ENCODE measurements at regions of chr14 and their contacts with region 1.

Region 1: DNA sequence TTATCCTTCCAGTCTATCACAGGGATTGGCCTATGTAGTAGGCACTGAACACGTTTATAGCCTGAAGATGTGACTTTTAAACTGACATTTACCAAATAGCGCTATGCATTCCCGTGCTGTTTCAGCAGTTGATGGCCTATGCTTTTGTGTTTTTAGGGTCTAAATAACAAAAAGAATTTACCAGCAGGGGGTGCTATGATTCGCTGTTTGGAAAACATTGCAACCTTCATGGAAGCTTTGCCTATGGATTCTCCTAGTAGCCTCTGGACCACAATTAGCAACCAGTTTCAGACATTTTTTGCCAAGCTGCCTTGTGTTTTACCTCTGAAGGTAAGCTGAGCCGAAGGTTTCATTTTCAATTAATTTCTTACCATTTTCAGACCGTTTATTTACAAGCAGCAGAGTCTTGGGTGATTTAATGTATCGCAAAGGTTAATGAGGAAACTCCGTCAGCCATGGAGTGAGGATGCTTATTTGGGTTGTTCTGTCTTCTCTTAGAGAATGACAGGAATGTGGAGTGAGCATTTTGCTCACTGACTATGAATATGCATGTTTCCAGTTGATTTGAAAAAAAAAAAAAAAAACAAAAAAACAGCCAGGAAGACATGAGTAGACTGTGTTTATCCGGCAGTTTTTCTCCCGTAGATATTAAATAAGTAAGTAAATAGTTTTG is 133.1 kb downstream of the PRIMA1 start:
- DNase-seq: peak; percentile 72
- H3K4me3 Mint-ChIP-seq: no peak overlapping the region
- H3K27ac Mint-ChIP-seq: no peak overlapping the region
- H3K4me1 Mint-ChIP-seq: no peaks in the 10 kb centered on the region
- H3K27me3 Mint-ChIP-seq: peaks cover 50% of the 10 kb centered on the region
- CTCF ChIP-seq: peak; percentile 63

Region 2: DNA sequence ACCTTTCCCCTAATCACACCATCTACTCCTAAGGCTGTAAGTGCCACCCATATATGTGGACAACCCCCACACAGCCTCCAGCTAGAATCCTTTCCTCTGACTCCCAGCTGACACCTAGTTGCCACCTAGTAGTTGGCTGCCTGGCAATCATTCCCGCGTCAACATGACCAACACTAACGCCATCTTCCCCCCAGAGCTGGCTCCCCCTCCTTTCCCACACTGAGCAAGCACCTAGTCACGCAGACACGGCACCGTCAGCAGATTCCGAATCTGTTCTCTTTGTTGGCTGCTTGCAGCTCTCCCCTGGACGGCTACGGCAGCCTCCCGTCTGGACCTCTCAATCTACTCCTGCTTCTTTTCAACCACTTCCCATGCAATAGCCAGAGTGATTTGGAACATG is 420.4 kb before region 1 on chr14:
- CTCF ChIA-PET with region 1: no interaction called
- POLR2A ChIA-PET with region 1: no interaction called
- intact Hi-C with region 1: no loop called
- DNase-seq: peak; percentile 66
- H3K4me3 Mint-ChIP-seq: peak overlapping the region; percentile 14
- H3K27ac Mint-ChIP-seq: peak overlapping the region; percentile 1
- H3K4me1 Mint-ChIP-seq: peaks cover 12% of the 10 kb centered on the region
- H3K27me3 Mint-ChIP-seq: no peaks in the 10 kb centered on the region
- CTCF ChIP-seq: no peak

Region 3: GRCh38 chr14:93481758-93482157 is 173.5 kb before region 1 on chr14:
- CTCF ChIA-PET with region 1: no interaction called
- POLR2A ChIA-PET with region 1: no interaction called
- intact Hi-C with region 1: no loop called
- DNase-seq: no peak
- H3K4me3 Mint-ChIP-seq: no peak overlapping the region
- H3K27ac Mint-ChIP-seq: no peak overlapping the region
- H3K4me1 Mint-ChIP-seq: no peaks in the 10 kb centered on the region
- H3K27me3 Mint-ChIP-seq: peaks cover 59% of the 10 kb centered on the region
- CTCF ChIP-seq: no peak

Region 4: DNA sequence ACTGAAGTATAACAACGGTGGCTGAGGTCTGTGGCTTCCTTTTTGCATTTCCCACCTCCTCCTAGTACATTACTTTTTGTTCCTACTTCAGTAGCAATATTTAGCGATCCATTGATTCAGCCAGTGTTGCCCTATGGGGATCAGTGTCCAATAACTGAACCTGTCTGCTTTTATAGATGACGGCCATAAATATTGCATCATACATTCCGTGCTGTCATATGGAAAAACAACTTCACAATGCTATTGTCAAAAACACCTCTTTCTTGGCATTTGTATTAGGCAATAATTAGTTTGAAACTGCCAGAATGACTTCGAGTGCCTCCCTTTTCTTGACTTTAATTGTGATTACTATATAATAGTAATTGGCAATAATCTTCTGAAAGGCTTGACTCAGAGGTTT is 16.4 kb before region 1 on chr14:
- CTCF ChIA-PET with region 1: interaction called, 19 read pairs
- POLR2A ChIA-PET with region 1: interaction called, 5 read pairs
- intact Hi-C with region 1: no loop called
- DNase-seq: no peak
- H3K4me3 Mint-ChIP-seq: no peak overlapping the region
- H3K27ac Mint-ChIP-seq: no peak overlapping the region
- H3K4me1 Mint-ChIP-seq: no peaks in the 10 kb centered on the region
- H3K27me3 Mint-ChIP-seq: peaks cover 94% of the 10 kb centered on the region
- CTCF ChIP-seq: no peak

Region 5: DNA sequence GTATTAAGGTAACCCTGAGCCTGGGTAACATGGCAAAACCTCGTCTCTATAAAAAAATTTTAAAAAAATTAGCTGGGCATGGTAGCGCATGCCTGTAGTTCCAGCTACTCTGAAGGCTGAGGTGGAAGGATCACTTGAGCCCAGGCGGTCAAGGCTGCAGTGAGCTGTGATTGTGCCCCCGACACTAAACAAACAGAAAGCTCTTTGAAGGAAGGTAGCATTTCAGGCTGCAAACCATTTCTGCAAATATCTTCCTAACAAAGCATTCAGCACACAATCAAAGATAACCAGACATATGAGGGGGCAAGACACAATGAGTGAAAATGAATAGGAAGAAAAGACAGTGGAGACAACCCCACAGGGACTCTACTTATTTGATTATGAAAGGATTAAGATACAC is 14.4 kb after region 1 on chr14:
- CTCF ChIA-PET with region 1: interaction called, 11 read pairs
- POLR2A ChIA-PET with region 1: interaction called, 3 read pairs
- intact Hi-C with region 1: no loop called
- DNase-seq: no peak
- H3K4me3 Mint-ChIP-seq: no peak overlapping the region
- H3K27ac Mint-ChIP-seq: no peak overlapping the region
- H3K4me1 Mint-ChIP-seq: no peaks in the 10 kb centered on the region
- H3K27me3 Mint-ChIP-seq: peaks cover 62% of the 10 kb centered on the region
- CTCF ChIP-seq: no peak

Region 6: DNA sequence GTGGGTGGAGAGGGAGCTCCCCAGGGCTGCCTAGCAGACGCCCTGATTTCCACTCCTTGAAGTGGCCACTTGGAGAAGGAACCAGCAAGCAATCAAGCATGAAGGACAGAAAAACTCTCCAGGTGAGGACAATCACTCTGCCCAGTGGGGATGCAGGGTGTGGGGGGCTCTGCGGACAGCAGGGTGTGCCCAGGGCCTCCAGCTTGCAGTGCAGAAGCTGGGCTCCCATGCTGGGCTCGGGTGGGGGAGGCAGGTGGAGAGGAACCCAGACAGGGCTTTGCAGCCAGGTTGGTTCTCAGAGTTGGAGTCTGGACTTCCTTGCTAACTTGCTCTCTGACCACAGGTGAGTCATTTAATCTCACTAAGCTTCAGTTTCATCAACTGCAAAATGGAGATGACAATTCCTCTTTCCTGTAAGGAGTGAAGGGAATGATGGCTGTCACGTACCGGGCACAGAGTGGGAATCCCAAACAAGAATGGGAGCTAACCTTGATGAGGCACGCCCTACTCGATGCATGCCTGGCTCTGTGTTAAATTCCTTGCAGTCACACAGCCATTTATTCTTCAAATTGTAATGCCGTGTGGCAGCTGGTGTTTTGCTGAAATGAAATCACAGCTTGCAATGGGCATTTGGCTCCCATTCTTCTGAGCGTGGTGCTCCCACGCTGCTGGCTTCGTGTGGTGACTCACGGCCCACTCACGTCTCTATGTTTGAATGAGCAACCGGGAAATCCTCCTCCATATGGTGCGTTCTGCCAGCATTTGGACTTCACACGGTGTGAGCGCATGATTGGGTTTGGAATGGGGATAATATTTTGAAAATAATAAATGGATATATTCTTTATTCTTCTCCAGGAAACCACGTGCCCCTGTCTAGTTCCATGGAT is 57.9 kb after region 1 on chr14:
- CTCF ChIA-PET with region 1: no interaction called
- POLR2A ChIA-PET with region 1: no interaction called
- intact Hi-C with region 1: no loop called
- DNase-seq: peak; percentile 47
- H3K4me3 Mint-ChIP-seq: no peak overlapping the region
- H3K27ac Mint-ChIP-seq: no peak overlapping the region
- H3K4me1 Mint-ChIP-seq: peaks cover 18% of the 10 kb centered on the region
- H3K27me3 Mint-ChIP-seq: no peaks in the 10 kb centered on the region
- CTCF ChIP-seq: no peak

Region 7: DNA sequence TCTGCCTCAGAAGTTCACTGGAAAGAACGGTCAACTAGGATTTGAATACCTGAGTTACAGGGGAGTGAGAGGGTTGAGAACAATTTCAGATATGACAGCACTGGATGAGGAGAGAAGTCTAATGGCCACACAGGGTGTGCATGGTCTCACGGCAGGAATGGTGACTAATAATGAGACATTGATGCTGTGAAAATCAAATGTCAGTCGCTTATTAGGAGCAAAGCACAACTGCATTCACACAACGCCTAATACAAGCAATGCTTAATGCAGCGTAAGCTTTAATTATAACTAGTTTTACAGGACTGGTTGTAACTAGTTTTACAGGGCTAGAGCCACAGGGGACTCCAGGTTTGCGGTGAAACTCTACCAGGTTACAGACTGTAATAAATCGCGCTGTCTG is 156.5 kb after region 1 on chr14:
- CTCF ChIA-PET with region 1: interaction called, 10 read pairs
- POLR2A ChIA-PET with region 1: no interaction called
- intact Hi-C with region 1: no loop called
- DNase-seq: no peak
- H3K4me3 Mint-ChIP-seq: no peak overlapping the region
- H3K27ac Mint-ChIP-seq: no peak overlapping the region
- H3K4me1 Mint-ChIP-seq: no peaks in the 10 kb centered on the region
- H3K27me3 Mint-ChIP-seq: peaks cover 16% of the 10 kb centered on the region
- CTCF ChIP-seq: no peak

Region 8: DNA sequence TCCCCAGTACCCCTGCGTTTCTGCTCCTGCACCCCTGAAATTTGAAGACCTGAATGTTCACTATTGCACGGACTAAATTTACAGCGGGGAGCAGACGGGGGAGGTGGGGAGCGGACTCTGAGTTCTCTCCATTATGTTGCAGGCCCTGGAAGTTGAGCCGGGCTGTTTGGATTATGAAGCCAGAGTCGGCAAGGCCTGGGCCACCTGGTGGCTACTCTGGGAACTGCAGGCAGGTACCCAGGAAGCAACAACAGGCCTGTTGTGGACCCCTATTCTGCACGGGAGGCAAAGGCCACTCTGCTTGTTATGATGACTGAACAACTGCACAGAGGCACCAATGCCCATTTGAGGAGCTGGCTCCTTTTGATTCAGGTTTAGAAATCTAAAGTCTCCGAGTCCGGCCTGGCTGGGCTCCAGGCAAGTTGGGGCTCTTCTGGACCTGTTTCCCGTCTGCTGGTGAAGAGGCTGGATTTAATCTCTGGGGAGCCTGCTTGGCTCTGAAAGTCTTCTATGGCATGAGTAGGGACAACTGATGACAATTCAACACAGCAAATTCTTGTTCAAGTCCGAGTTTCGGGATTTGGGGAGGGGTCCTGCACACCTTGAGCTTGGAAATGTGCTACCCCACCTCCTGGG is 237.8 kb after region 1 on chr14:
- CTCF ChIA-PET with region 1: interaction called, 135 read pairs
- POLR2A ChIA-PET with region 1: no interaction called
- intact Hi-C with region 1: loop called (anchors 1 kb)
- DNase-seq: peak; percentile 74
- H3K4me3 Mint-ChIP-seq: no peak overlapping the region
- H3K27ac Mint-ChIP-seq: no peak overlapping the region
- H3K4me1 Mint-ChIP-seq: peaks cover 20% of the 10 kb centered on the region
- H3K27me3 Mint-ChIP-seq: peaks cover 32% of the 10 kb centered on the region
- CTCF ChIP-seq: peak; percentile 96

Region 9: GRCh38 chr14:93939304-93940229 is 284.4 kb after region 1 on chr14:
- CTCF ChIA-PET with region 1: interaction called, 36 read pairs
- POLR2A ChIA-PET with region 1: no interaction called
- intact Hi-C with region 1: no loop called
- DNase-seq: peak; percentile 74
- H3K4me3 Mint-ChIP-seq: no peak overlapping the region
- H3K27ac Mint-ChIP-seq: no peak overlapping the region
- H3K4me1 Mint-ChIP-seq: peaks cover 16% of the 10 kb centered on the region
- H3K27me3 Mint-ChIP-seq: no peaks in the 10 kb centered on the region
- CTCF ChIP-seq: peak; percentile 89